GM12878 (cell line): ENCODE measurements at regions of chr12 and their contacts with region 1.

Region 1: DNA sequence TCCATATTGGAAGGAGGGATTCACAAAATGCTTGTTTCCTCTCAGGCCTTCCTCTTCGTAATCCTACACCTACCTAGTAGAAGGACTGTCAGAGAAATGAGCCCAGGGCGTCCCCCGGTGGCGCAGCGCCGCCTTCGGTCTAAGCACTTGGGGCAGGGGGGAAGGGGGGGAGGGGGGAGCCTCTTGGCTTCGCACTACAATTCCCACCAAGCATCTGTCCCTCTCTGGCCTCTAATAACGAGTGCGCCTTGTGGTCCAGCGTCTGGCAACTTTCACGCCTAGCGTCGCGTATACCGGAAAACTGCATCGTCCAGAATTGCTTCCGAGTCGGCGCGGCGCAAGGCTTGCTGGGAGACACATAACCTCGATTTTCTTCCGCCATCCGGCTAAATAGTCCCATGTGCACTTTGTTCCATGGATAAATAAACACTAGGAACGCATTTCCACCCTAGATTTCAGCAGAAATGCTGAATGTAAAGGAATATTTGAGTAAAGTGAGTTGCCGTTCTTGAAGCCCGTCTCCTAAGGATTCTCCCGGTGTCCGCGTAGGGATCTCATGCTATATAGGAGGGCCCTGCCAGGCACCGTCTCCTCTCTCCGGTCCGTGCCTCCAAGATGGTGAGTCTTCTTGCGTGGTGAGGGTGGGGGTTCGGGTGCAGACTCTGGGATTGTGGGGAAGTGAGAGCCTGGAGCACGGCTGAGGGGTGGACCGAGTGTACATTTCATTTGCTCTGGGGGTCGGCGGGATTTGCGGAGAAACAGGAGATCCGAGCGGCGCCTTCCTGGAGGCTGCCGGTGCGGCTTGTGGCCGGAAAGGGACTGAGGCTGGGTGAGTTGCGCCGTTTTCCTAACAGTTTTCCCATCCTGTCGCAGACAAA is at the start of gene RPS26:
- DNase-seq: peak; percentile 98
- ATAC-seq: peak; percentile 96
- H3K4me3 ChIP-seq: peak within 1 kb of the TSS; percentile 98
- H3K27ac ChIP-seq: peak within 1 kb of the TSS; percentile 98
- H3K4me1 ChIP-seq: peaks cover 13% of the 10 kb centered on the region
- H3K27me3 ChIP-seq: no peaks in the 10 kb centered on the region
- CTCF ChIP-seq: peak; percentile 46 to 64 (median 61)
- EP300 ChIP-seq: peak in 1 of 2 experiments; percentile 60; a peak in 2 of 4 replicates
- POLR2A ChIP-seq: peak; percentile 100
- RAD21 ChIP-seq: peak; percentile 85
- polyA plus RNA-seq, gene RPS26: 2,920 to 3,147 TPM

Region 2: GRCh38 chr12:55829967-55830600 is 211.7 kb before region 1 on chr12:
- CTCF ChIA-PET with region 1: interaction called, 4 read pairs
- POLR2A ChIA-PET with region 1: interaction called, 3 read pairs
- RAD21 ChIA-PET with region 1: interaction called, 9 read pairs
- SMC1A ChIA-PET with region 1: no interaction called
- in situ Hi-C with region 1: no loop called
- intact Hi-C with region 1: loop called (anchors 5 kb)
- DNase-seq: no peak
- ATAC-seq: peak; percentile 25
- H3K4me3 ChIP-seq: peak overlapping the region; percentile 96
- H3K27ac ChIP-seq: peak overlapping the region; percentile 76
- H3K4me1 ChIP-seq: peaks cover 21% of the 10 kb centered on the region; the same call in 1 of the 2 replicates
- H3K27me3 ChIP-seq: no peaks in the 10 kb centered on the region
- CTCF ChIP-seq: no peak
- EP300 ChIP-seq: no peak
- POLR2A ChIP-seq: 0 out of 2 replicates have a peak, but pooled peaks have one; percentile 20
- RAD21 ChIP-seq: 0 out of 2 replicates have a peak, but pooled peaks have one; percentile 13

Region 3: GRCh38 chr12:55912908-55913307 is 128.9 kb before region 1 on chr12:
- CTCF ChIA-PET with region 1: no interaction called
- POLR2A ChIA-PET with region 1: no interaction called
- RAD21 ChIA-PET with region 1: no interaction called
- SMC1A ChIA-PET with region 1: no interaction called
- in situ Hi-C with region 1: no loop called
- intact Hi-C with region 1: no loop called
- DNase-seq: no peak
- ATAC-seq: no peak
- H3K4me3 ChIP-seq: no peak overlapping the region
- H3K27ac ChIP-seq: no peak overlapping the region
- H3K4me1 ChIP-seq: peaks cover 7% of the 10 kb centered on the region; the same call in 1 of the 2 replicates
- H3K27me3 ChIP-seq: no peaks in the 10 kb centered on the region
- CTCF ChIP-seq: no peak
- EP300 ChIP-seq: no peak
- POLR2A ChIP-seq: no peak
- RAD21 ChIP-seq: no peak

Region 4: DNA sequence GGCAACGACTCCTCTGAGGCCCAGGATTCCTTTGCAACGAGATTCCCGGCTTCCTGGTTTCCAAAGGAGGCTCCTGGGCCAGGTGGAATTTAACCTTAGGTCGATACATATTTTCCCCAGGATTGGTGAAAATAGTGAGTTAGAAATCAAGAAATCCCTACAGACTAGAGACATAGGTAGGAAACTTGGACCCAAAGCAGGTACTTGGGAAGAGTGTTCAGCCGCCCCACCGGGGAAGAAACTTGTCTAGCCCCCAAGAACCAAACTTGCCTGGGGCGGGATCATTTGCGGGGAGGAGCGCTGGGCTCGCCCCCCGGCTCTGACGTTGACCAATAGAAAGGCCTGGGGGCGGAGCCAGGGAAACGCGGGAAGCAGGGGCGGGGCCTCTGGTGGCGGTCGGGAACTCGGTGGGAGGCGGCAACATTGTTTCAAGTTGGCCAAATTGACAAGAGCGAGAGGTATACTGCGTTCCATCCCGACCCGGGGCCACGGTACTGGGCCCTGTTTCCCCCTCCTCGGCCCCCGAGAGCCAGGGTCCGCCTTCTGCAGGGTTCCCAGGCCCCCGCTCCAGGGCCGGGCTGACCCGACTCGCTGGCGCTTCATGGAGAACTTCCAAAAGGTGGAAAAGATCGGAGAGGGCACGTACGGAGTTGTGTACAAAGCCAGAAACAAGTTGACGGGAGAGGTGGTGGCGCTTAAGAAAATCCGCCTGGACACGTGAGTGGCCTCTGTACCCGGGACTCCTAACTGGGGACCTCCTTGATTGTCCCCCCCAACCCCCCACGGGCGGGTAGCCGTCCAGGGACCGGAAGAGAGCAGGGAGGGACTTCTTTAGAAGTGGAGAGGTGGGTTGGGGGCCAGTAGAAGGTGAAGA is 75.1 kb before region 1 on chr12 and contains the start of gene CDK2:
- CTCF ChIA-PET with region 1: no interaction called
- POLR2A ChIA-PET with region 1: interaction called, 11 read pairs
- RAD21 ChIA-PET with region 1: no interaction called
- SMC1A ChIA-PET with region 1: no interaction called
- in situ Hi-C with region 1: no loop called
- intact Hi-C with region 1: no loop called
- DNase-seq: peak; percentile 40
- ATAC-seq: peak; percentile 91
- H3K4me3 ChIP-seq: peak within 1 kb of the TSS; percentile 96
- H3K27ac ChIP-seq: peak within 1 kb of the TSS; percentile 79
- H3K4me1 ChIP-seq: peaks cover 15% of the 10 kb centered on the region
- H3K27me3 ChIP-seq: no peaks in the 10 kb centered on the region
- CTCF ChIP-seq: no peak
- EP300 ChIP-seq: no peak
- POLR2A ChIP-seq: peak; percentile 81
- RAD21 ChIP-seq: no peak
- polyA plus RNA-seq, gene CDK2: 13.1 to 16.1 TPM

Region 5: DNA sequence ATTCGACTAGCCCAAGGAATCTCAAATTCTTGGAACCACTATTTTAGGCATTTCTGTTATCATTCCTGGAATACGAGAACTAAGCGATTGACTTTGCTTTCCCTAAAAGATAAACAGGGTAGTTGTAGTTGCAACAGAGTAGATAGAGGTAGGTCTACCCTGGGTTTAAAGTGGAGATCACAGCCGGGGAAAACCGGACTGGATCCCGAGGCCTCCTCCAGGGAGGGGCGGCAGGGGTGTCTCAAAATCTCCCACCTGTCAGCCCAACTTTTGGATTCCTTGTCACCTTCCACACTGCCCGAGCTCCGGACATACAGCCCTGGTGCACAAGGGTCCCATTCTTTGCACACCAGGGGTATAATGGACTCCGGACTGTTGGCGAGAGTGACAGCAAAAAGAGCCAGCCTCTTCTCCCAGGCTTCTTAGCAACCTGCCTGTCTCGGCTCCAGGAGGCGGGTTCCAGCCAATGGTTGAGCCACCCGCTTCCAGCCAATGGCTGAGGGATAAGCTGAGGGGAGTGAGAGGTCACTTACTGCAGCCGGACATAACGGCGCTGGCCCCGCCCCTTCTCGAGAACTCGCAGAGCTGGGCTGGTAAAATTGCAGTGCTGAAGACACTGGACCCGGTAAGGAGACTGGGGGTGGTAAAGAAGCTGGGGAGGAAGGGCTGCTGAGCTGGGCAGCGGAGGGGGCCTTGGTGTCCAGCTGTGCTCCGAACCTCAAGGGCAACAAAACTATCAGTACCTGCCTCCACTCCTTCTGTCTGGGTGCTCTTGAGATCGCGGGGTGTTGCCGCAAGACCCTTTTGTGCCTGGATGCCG is 44.9 kb before region 1 on chr12 and contains the start of gene SUOX:
- CTCF ChIA-PET with region 1: interaction called, 23 read pairs
- POLR2A ChIA-PET with region 1: interaction called, 10 read pairs
- RAD21 ChIA-PET with region 1: interaction called, 30 read pairs
- SMC1A ChIA-PET with region 1: interaction called, 52 read pairs
- in situ Hi-C with region 1: no loop called
- intact Hi-C with region 1: loop called (anchors 1 kb)
- DNase-seq: peak; percentile 83
- ATAC-seq: peak; percentile 100
- H3K4me3 ChIP-seq: peak within 1 kb of the TSS; percentile 74
- H3K27ac ChIP-seq: peak within 1 kb of the TSS; percentile 33; the same call in 1 of the 2 replicates
- H3K4me1 ChIP-seq: peaks cover 3% of the 10 kb centered on the region; the same call in 1 of the 2 replicates
- H3K27me3 ChIP-seq: no peaks in the 10 kb centered on the region
- CTCF ChIP-seq: no peak
- EP300 ChIP-seq: no peak
- POLR2A ChIP-seq: peak; percentile 72
- RAD21 ChIP-seq: no peak
- polyA plus RNA-seq, gene SUOX: 5.1 to 5.2 TPM

Region 6: DNA sequence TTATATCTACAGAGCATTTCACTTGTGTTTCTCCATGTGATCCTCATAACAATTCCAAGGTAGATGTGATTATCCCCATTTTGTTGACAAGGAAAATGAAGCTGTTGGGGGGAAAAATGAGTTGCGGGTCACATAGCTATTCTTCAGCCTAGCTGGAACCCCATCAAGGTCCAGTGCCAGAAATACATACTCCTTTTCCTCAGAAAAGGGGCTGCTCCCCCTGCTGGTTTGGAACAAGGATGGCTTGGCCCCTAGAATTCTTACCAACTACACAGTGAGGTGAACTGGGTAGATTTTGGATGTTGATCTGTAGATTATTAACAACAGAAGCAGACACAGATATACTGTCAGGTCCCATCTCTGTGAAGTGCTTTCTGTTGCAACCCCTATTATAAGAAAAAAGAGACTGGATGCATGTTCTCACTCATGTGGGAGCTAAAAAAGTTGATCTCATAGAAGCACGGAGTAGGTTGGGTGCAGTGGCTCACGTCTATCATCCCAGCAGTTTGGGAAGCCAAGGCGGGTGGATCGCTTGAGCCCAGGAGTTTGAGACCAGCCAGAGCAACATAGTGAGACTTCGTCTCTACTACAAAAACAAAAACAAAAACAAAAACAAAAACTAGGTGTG is 12.0 kb before region 1 on chr12:
- CTCF ChIA-PET with region 1: interaction called, 12 read pairs
- POLR2A ChIA-PET with region 1: interaction called, 4 read pairs
- RAD21 ChIA-PET with region 1: interaction called, 3 read pairs
- SMC1A ChIA-PET with region 1: interaction called, 3 read pairs
- in situ Hi-C with region 1: no loop called
- intact Hi-C with region 1: no loop called
- DNase-seq: no peak
- ATAC-seq: peak; percentile 94
- H3K4me3 ChIP-seq: no peak overlapping the region
- H3K27ac ChIP-seq: no peak overlapping the region
- H3K4me1 ChIP-seq: no peaks in the 10 kb centered on the region
- H3K27me3 ChIP-seq: no peaks in the 10 kb centered on the region
- CTCF ChIP-seq: peak; percentile 69 to 72 (median 71)
- EP300 ChIP-seq: no peak
- POLR2A ChIP-seq: no peak
- RAD21 ChIP-seq: peak; percentile 64

Region 7: DNA sequence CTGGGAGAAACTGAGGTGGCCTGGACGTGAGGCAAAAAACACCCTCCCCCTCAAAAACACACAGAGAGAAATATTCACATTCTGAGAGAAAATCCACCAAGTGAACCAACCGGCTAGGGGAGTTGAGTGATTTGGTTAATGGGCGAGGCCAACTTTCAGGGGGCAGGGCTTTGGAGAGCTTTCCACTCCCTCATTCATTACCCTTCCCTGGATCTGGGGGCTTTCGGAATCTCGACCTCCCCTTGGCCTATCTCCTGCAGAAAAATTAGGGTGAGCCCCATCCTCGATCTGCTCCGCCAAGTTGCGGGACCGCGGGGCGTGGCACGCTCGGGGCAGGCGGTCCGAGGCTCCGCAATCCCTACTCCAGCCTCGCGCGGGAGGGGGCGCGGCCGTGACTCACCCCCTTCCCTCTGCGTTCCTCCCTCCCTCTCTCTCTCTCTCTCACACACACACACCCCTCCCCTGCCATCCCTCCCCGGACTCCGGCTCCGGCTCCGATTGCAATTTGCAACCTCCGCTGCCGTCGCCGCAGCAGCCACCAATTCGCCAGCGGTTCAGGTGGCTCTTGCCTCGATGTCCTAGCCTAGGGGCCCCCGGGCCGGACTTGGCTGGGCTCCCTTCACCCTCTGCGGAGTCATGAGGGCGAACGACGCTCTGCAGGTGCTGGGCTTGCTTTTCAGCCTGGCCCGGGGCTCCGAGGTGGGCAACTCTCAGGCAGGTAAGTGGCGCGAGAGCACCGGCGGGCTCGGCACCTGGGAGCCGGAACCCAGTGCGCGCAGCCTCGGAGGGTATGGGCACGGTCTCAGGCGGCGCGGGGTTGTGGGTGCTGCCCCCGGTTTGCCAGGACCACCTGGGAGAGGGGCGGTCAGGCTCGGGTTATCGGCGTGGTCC is 38.1 kb after region 1 on chr12 and contains the start of gene ERBB3:
- CTCF ChIA-PET with region 1: interaction called, 3 read pairs
- POLR2A ChIA-PET with region 1: interaction called, 4 read pairs
- RAD21 ChIA-PET with region 1: no interaction called
- SMC1A ChIA-PET with region 1: no interaction called
- in situ Hi-C with region 1: no loop called
- intact Hi-C with region 1: loop called (anchors 5 kb)
- DNase-seq: no peak
- ATAC-seq: peak; percentile 66
- H3K4me3 ChIP-seq: peak within 1 kb of the TSS; percentile 65
- H3K27ac ChIP-seq: no peak within 1 kb of the TSS
- H3K4me1 ChIP-seq: no peaks in the 10 kb centered on the region
- H3K27me3 ChIP-seq: peaks cover 9 to 15% of the 10 kb centered on the region in 2 experiments; a peak in 3 of 4 replicates
- CTCF ChIP-seq: no peak
- EP300 ChIP-seq: no peak
- POLR2A ChIP-seq: no peak
- RAD21 ChIP-seq: no peak
- polyA plus RNA-seq, gene ERBB3: 0.08 TPM in 1 of 2 experiments, not detected in the other

Region 8: DNA sequence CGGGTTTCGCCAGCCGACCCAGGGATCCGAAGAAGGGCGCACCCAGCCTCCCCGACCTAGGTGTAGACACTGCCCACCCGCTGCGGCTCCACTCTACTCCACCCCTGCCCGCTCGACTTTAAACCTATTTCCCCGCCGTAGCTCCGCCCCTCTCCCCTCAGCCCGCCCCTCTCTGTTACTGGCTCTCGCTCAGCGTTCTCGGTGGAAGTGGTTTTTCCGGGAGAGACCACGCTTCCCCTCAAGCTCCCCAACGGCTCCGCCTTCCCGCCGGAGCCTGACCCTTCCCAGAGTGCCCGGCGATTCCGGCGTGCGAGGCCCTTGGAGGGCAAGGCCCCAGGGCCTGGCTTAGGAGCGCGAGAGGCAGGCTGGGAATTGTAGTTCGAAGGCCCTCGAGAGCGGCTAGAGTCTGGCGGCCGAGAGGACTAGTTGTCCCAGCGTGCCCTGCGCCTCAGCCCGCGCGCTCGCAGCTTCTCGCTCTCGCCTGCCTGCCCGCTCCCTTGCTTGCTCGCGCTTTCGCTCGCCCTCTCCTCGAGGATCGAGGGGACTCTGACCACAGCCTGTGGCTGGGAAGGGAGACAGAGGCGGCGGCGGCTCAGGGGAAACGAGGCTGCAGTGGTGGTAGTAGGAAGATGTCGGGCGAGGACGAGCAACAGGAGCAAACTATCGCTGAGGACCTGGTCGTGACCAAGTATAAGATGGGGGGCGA is 62.5 kb after region 1 on chr12 and contains the start of gene PA2G4:
- CTCF ChIA-PET with region 1: interaction called, 7 read pairs
- POLR2A ChIA-PET with region 1: interaction called, 22 read pairs
- RAD21 ChIA-PET with region 1: interaction called, 12 read pairs
- SMC1A ChIA-PET with region 1: interaction called, 6 read pairs
- in situ Hi-C with region 1: loop called (anchors 5 kb)
- intact Hi-C with region 1: no loop called
- DNase-seq: peak; percentile 97
- ATAC-seq: peak; percentile 97
- H3K4me3 ChIP-seq: peak within 1 kb of the TSS; percentile 97
- H3K27ac ChIP-seq: peak within 1 kb of the TSS; percentile 86
- H3K4me1 ChIP-seq: peaks cover 3% of the 10 kb centered on the region; the same call in 1 of the 2 replicates
- H3K27me3 ChIP-seq: no peaks in the 10 kb centered on the region; a peak in 1 of 4 replicates
- CTCF ChIP-seq: no peak
- EP300 ChIP-seq: peak in 1 of 2 experiments; percentile 47; a peak in 2 of 4 replicates
- POLR2A ChIP-seq: peak; percentile 93
- RAD21 ChIP-seq: no peak
- polyA plus RNA-seq, gene PA2G4: 148 to 215 TPM

Region 9: GRCh38 chr12:56398324-56398723 is 356.5 kb after region 1 on chr12:
- CTCF ChIA-PET with region 1: no interaction called
- POLR2A ChIA-PET with region 1: no interaction called
- RAD21 ChIA-PET with region 1: no interaction called
- SMC1A ChIA-PET with region 1: no interaction called
- in situ Hi-C with region 1: no loop called
- intact Hi-C with region 1: no loop called
- DNase-seq: no peak
- ATAC-seq: no peak
- H3K4me3 ChIP-seq: no peak overlapping the region
- H3K27ac ChIP-seq: no peak overlapping the region
- H3K4me1 ChIP-seq: no peaks in the 10 kb centered on the region
- H3K27me3 ChIP-seq: no peaks in the 10 kb centered on the region
- CTCF ChIP-seq: no peak
- EP300 ChIP-seq: no peak
- POLR2A ChIP-seq: no peak
- RAD21 ChIP-seq: no peak